Adrenal gland (tissue), 19 donors: ENCODE measurements at regions of chr9 and their contacts with region 1.

Region 1: GRCh38 chr9:120348951-120349429 is 231.0 kb downstream of the CDK5RAP2 start:
- DNase-seq: peak; percentile 42 to 67 (median 48)
- H3K4me3 ChIP-seq: no peak overlapping the region
- H3K27ac ChIP-seq: no peak overlapping the region
- H3K4me1 ChIP-seq: peaks cover 0 to 9% of the 10 kb centered on the region in 2 donors
- H3K27me3 ChIP-seq: no peaks in the 10 kb centered on the region
- CTCF ChIP-seq: peak; percentile 50 to 77 (median 72)
- POLR2A ChIP-seq: no peak

Region 2: DNA sequence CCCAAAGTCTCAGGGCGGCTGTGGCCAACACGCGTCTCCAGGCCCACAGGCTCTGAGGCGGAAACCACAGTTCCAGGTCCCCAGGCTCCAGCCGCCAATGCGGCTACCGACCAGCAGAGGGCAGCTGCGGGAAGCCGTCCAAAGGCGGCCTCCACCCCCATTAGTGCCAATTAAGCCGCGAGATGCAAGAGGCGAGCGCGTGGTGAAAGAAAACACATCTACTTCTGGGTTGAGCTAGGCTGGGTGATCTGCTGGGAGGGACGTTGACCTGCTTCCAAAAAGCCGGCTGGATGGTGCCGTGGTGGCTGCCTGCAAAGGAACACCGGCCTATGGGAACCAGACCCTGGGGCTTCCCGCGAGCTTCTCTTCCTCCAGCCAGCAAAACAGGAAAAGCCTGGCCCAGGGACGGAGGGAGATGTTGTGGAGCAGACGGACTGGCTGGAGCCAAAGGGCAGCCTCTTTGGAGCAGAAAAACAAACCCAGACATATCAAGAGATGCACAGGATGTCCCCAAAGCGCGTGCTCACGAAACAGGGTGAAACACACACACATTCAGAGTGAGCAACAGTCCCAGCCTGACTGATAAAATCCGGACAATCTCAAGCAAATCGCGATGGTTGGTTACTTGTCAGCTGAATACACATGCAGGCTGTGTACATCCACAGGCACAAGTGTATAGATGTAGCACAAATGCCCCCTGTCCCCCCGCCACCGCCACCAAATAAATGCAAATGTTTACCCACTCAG is 792.7 kb before region 1 on chr9:
- intact Hi-C with region 1: loop called (anchors 2 to 10 kb)
- DNase-seq: peak; percentile 57 to 89 (median 77)
- H3K4me3 ChIP-seq: peak overlapping the region in 1 of 4 donors; percentile 25
- H3K27ac ChIP-seq: no peak overlapping the region
- H3K4me1 ChIP-seq: peaks cover 0 to 5% of the 10 kb centered on the region in 2 donors
- H3K27me3 ChIP-seq: no peaks in the 10 kb centered on the region
- CTCF ChIP-seq: peak; percentile 76 to 93 (median 85)
- POLR2A ChIP-seq: no peak

Region 3: DNA sequence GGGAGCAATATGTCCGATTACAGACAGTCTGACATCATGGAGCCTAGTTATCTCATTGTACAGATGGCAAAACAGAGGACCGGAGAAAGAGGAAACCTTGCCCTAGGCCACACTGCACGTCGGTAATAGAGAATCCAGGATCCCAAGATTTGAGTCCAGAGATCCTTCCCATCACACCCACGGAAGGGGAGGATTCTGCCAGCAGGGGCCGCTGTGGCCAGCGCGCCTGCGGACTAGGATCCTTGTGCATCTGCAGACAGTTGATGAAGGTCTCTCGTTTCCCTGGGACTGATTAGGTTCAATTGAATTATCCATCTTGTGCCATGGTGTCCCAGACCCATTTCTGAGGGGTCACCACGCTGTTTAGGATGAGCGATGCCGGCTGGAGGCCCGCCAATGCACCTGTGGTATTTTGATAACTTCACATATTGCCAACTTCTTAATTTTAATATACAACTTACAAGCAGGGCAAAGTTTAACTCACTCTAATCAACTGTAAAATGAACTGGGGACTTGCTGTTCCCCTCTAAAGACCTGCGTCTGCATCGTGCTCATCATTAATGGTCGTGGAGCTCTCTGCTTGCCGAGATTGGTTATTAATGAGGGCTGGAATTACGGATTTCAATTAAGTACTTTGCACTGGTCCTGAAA is 387.1 kb before region 1 on chr9:
- intact Hi-C with region 1: loop called in 1 of 2 experiments (anchors 5 kb)
- DNase-seq: peak; percentile 41 to 72 (median 63)
- H3K4me3 ChIP-seq: no peak overlapping the region
- H3K27ac ChIP-seq: no peak overlapping the region
- H3K4me1 ChIP-seq: no peaks in the 10 kb centered on the region
- H3K27me3 ChIP-seq: no peaks in the 10 kb centered on the region
- CTCF ChIP-seq: peak; percentile 54 to 76 (median 62)
- POLR2A ChIP-seq: no peak

Region 4: GRCh38 chr9:120555839-120556238 is 206.8 kb after region 1 on chr9:
- intact Hi-C with region 1: no loop called
- DNase-seq: no peak
- H3K4me3 ChIP-seq: no peak overlapping the region
- H3K27ac ChIP-seq: no peak overlapping the region
- H3K4me1 ChIP-seq: no peaks in the 10 kb centered on the region
- H3K27me3 ChIP-seq: no peaks in the 10 kb centered on the region
- CTCF ChIP-seq: no peak
- POLR2A ChIP-seq: no peak

Region 5: GRCh38 chr9:121185178-121185745 is 836.3 kb after region 1 on chr9:
- intact Hi-C with region 1: no loop called
- DNase-seq: no peak
- H3K4me3 ChIP-seq: no peak overlapping the region
- H3K27ac ChIP-seq: no peak overlapping the region
- H3K4me1 ChIP-seq: peaks cover 10 to 74% of the 10 kb centered on the region in 2 donors
- H3K27me3 ChIP-seq: no peaks in the 10 kb centered on the region
- CTCF ChIP-seq: no peak
- POLR2A ChIP-seq: no peak